ENCODE measurements at regions of chr11 and their contacts with region 1.

Region 1: DNA sequence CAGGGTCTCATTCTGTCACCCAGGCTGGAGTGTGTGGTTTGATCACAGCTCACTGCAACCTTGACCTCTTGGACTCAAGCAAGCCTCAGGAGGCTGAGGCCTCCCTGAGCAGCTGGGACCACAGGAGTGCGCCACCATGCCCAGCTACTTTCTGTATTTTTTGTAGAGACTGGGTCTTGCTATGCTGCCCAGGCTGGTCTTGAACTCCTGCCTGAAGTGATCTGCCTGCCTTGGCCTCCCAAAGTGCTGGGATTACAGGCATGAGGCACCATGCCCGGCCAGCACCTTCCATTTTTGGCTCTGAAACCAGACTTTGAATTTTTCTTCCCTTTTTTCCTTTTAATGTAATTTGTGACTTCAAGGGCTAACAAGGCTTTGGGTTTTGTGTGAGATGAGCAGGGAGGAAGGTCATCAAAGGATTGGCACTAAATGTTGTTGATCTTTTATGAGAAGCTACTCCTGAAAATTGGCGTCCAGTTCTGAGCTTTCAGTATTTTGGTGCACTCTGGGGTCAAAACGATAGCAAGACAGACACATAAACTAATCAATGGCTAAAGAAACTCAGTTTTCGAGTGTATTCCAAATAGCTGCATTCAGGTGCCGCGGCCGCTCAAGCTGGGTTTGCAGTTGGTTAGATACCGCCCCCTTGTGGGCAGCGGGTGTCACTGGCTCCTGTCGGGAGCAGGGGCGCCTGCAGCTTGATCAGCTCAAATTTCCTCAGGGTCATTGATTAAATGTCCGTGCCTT is 51.9 kb upstream of the CLMP start:
- DNase-seq: peak; percentile 83 to 88 (median 86)
- ATAC-seq: peak; percentile 80
- H3K4me3 ChIP-seq: no peak overlapping the region
- H3K27ac ChIP-seq: no peak overlapping the region
- H3K4me1 ChIP-seq: peaks cover 8% of the 10 kb centered on the region
- H3K27me3 ChIP-seq: no peaks in the 10 kb centered on the region
- CTCF ChIP-seq: peak; percentile 92 to 97 (median 95)
- POLR2A ChIP-seq: no peak

Region 2: GRCh38 chr11:123110356-123110755 is 136.6 kb before region 1 on chr11:
- intact Hi-C with region 1: loop called (anchors 5 kb)
- DNase-seq: no peak
- ATAC-seq: no peak
- H3K4me3 ChIP-seq: no peak overlapping the region
- H3K27ac ChIP-seq: no peak overlapping the region
- H3K4me1 ChIP-seq: no peaks in the 10 kb centered on the region
- H3K27me3 ChIP-seq: no peaks in the 10 kb centered on the region
- CTCF ChIP-seq: no peak
- POLR2A ChIP-seq: no peak

Measured in body of pancreas (tissue), 4 donors.